HCT116 (cell line): ENCODE measurements at regions of chr6 and their contacts with region 1.

Region 1: GRCh38 chr6:166786704-166787293 is 159.7 kb upstream of the RPS6KA2 start:
- DNase-seq: peak; percentile 62
- ATAC-seq: peak; percentile 77
- H3K4me3 ChIP-seq: no peak overlapping the region
- H3K27ac ChIP-seq: no peak overlapping the region
- H3K4me1 ChIP-seq: no peaks in the 10 kb centered on the region
- H3K27me3 ChIP-seq: no peaks in the 10 kb centered on the region
- CTCF ChIP-seq: peak; percentile 58 to 86 (median 80)
- POLR2A ChIP-seq: no peak
- RAD21 ChIP-seq: peak; percentile 87

Region 2: DNA sequence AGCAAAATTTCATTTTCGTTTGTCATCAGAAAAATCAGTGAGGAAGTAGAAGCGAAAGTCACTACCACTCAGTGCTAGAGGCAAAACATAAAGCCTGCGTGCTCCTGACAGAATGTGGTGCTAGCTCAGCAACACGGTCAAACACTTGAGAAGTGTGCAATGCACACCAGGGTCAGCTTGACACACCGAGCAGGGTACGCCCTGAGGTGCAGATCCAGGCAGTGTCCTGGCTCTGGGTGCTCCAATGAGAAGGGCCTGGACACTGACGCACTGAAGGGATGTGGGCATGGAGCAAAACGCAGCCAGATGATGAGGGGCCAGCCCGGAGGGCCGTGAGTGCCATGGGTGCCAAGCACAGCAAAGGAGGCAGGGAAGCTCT is 163.6 kb after region 1 on chr6:
- CTCF ChIA-PET with region 1: interaction called, 11 read pairs
- POLR2A ChIA-PET with region 1: no interaction called
- RAD21 ChIA-PET with region 1: interaction called in 1 of 2 experiments, 3 read pairs
- intact Hi-C with region 1: loop called (anchors 2 kb)
- DNase-seq: no peak
- ATAC-seq: no peak
- H3K4me3 ChIP-seq: no peak overlapping the region
- H3K27ac ChIP-seq: no peak overlapping the region
- H3K4me1 ChIP-seq: peaks cover 0 to 10% of the 10 kb centered on the region in 2 experiments; a peak in 1 of 4 replicates
- H3K27me3 ChIP-seq: no peaks in the 10 kb centered on the region
- CTCF ChIP-seq: no peak
- POLR2A ChIP-seq: no peak
- RAD21 ChIP-seq: no peak

Region 3: DNA sequence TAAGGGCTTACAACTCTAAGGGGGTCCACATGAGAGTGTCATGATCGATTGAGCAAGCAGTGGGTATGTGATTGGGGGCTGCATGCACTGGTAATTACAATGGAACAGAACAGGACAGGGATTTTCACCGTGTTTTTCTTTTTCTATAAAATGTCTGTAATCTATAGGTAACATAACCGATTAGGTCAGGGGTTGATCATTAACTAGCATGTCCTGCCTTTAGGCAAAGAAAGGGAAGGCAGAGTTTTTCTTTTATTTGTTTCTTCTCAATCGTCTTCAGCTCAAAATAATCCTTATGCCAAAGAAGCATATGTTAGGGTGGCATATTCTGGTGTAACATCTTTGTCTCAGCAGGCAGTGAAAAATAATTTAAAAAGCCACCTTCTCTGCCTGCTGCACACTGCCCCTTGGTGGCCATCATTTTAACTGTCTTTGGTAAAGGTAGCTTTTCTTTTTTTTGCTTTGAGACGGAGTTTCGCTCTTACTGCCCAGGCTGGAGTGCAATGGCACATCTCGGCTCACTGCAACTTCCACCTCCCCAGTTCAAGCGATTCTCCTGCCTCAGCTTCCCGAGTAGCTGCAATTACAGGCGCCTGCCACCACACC is 202.7 kb after region 1 on chr6:
- CTCF ChIA-PET with region 1: interaction called, 7 read pairs
- POLR2A ChIA-PET with region 1: no interaction called
- RAD21 ChIA-PET with region 1: no interaction called
- intact Hi-C with region 1: loop called (anchors 1 kb)
- DNase-seq: no peak
- ATAC-seq: peak; percentile 82
- H3K4me3 ChIP-seq: no peak overlapping the region
- H3K27ac ChIP-seq: no peak overlapping the region
- H3K4me1 ChIP-seq: no peaks in the 10 kb centered on the region
- H3K27me3 ChIP-seq: no peaks in the 10 kb centered on the region
- CTCF ChIP-seq: peak; percentile 38 to 57 (median 48); a peak in 5 of 6 replicates
- POLR2A ChIP-seq: no peak
- RAD21 ChIP-seq: peak; percentile 67

Region 4: DNA sequence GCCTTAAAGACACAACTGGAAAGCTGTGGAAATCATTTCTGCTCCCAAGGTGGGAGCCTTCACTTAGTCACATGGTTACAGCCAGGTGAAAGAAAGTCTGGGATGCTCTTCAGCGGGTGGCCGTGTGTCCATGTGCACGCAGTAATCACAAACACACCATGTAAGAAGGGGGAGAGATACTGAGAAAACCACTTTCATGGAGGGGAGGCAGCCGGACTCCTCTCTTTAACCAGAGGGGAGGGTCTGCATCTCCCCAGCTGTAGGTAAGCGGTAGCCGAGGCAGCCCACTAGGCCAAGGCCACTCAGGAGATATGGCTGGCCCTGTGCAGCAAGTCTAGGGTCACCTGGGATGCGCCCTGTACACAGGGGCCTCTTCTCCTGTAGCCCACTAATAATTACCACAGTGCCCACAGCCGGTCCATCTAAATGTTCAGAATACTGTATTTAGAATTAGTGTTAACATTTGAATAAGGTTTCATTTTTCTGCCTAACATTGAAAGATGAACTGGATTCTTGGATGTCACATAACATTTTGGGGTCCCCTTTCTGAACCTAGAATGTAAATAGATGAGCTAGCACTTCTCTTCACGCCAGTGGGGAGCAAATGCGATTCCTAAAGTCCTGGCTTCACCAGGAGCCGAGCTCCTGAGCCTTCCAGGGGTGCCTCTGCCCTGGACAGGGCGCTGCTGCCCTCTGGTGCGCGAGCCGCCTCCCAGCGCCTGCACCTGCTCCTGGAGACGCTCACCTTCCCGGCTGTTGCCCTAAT is 355.1 kb after region 1 on chr6:
- CTCF ChIA-PET with region 1: no interaction called
- POLR2A ChIA-PET with region 1: no interaction called
- RAD21 ChIA-PET with region 1: interaction called in 1 of 2 experiments, 3 read pairs
- intact Hi-C with region 1: loop called (anchors 1 kb)
- DNase-seq: peak; percentile 24
- ATAC-seq: peak; percentile 99
- H3K4me3 ChIP-seq: no peak overlapping the region
- H3K27ac ChIP-seq: no peak overlapping the region
- H3K4me1 ChIP-seq: no peaks in the 10 kb centered on the region
- H3K27me3 ChIP-seq: peaks cover 5% of the 10 kb centered on the region; the same call in 1 of the 2 replicates
- CTCF ChIP-seq: peak; percentile 77 to 90 (median 88)
- POLR2A ChIP-seq: no peak
- RAD21 ChIP-seq: peak; percentile 96